ENCODE measurements at regions of chr21 and their contacts with region 1.

Region 1: GRCh38 chr21:16310176-16310575 is 580.4 kb downstream of the USP25 start:
- DNase-seq: no peak
- ATAC-seq: no peak

Region 2: GRCh38 chr21:15742052-15742670 is 568.0 kb before region 1 on chr21:
- intact Hi-C with region 1: loop called (anchors 5 kb)
- DNase-seq: no peak
- ATAC-seq: peak; percentile 40

Region 3: DNA sequence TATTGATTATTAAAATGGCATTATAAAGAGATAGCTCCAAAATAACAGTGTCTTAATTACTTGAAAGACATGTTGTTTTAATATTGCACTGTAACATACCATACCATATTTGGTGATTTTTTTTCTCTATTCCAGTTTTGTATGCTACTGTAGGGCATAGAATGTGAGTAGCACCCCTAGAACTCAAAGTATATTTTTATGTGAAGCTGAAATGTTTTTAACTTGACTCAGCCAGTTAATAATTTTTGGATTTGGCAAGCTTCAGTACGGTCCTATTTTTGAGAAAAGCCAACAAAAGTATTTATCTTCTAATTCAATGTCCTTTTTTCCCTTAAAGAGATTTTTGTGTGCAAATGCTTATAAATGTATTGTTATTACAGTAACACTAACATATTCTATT is 13.4 kb after region 1 on chr21:
- intact Hi-C with region 1: no loop called
- DNase-seq: no peak
- ATAC-seq: no peak